BJ (cell line): ENCODE measurements at regions of chr5 and their contacts with region 1.

Region 1: DNA sequence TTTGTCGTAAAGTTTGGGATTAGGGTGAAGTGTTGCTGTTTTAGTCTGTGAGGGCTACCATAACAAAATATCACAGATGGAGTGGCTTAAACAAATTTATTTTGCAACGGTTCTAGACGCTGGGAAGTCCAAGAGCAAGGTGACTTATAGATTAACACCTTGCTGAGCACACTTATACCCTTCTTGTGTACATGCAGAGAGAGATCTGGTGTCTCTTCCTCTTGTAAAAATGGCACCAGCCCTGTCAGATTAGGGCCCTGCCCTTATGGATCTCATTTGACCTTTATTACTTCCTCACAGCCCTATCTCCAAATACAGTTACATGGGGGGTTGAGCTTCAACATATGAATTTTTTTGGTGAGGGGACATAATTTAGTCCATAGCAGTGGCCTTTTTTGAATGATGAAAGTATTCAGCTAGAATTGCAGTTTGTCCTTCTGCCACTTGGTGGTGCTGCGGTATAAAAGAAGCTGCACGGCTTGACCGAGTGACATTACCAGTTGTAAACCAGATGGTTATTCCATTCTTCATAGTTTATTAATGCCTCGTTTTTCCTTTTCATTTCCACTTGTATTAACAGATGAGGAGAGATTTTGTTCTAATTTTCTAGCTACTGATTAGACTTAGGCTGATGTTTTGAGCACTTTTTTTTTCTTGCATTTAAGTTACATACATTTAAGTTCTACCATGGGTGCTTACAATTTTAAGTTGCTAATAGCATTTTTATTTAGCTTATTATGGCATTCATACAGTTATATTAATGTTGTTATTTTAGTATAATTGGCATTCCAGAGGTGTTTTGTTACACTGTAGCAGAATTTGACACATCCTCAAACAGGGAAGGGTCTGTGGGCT is 19.4 kb downstream of the DCP2 start:
- DNase-seq: no peak
- H3K4me3 ChIP-seq: no peak overlapping the region
- H3K27me3 ChIP-seq: no peaks in the 10 kb centered on the region
- CTCF ChIP-seq: peak; percentile 82

Region 2: GRCh38 chr5:112479407-112479806 is 516.6 kb before region 1 on chr5:
- CTCF ChIA-PET with region 1: no interaction called
- POLR2A ChIA-PET with region 1: no interaction called
- DNase-seq: no peak
- H3K4me3 ChIP-seq: no peak overlapping the region
- H3K27me3 ChIP-seq: no peaks in the 10 kb centered on the region
- CTCF ChIP-seq: no peak

Region 3: DNA sequence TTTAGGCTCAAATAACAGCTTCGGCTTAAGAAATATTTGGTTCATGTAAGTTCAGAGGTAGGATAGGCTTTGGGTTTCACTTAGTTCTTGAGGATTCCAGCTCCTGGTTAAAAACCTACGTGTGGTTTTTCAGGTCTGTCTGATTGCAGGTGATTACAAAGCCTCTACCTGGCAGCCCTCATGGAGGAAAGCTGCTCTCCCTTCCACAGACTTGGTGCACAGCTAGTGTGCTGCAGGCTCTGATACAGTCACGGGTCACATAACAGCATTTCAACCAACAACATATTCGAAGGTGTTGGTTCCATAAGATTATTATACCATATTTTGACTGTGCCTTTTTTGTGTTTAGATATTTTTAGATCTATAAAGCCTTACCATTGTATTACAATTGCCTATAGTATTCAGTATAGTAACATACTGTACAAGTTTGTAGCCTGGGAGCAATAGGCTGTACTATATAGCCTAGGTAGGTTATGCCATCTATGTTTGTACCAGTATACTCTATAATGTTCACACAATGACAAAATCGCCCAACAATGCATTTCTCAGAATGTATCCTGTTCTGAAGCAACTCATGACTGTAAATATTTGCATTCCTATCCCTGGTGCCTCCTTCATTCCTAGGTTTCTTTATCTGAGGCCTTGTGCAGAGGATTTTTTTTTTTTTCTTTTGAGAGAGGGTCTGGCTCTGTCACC is 27.4 kb before region 1 on chr5:
- CTCF ChIA-PET with region 1: no interaction called
- POLR2A ChIA-PET with region 1: no interaction called
- DNase-seq: no peak
- H3K4me3 ChIP-seq: no peak overlapping the region
- H3K27me3 ChIP-seq: no peaks in the 10 kb centered on the region; the same call in 1 of the 2 replicates
- CTCF ChIP-seq: no peak

Region 4: GRCh38 chr5:113330533-113331208 is 334.7 kb after region 1 on chr5:
- CTCF ChIA-PET with region 1: interaction called, 34 read pairs
- POLR2A ChIA-PET with region 1: no interaction called
- DNase-seq: no peak
- H3K4me3 ChIP-seq: no peak overlapping the region
- H3K27me3 ChIP-seq: no peaks in the 10 kb centered on the region
- CTCF ChIP-seq: peak; percentile 31; the same call in 1 of the 2 replicates

Region 5: DNA sequence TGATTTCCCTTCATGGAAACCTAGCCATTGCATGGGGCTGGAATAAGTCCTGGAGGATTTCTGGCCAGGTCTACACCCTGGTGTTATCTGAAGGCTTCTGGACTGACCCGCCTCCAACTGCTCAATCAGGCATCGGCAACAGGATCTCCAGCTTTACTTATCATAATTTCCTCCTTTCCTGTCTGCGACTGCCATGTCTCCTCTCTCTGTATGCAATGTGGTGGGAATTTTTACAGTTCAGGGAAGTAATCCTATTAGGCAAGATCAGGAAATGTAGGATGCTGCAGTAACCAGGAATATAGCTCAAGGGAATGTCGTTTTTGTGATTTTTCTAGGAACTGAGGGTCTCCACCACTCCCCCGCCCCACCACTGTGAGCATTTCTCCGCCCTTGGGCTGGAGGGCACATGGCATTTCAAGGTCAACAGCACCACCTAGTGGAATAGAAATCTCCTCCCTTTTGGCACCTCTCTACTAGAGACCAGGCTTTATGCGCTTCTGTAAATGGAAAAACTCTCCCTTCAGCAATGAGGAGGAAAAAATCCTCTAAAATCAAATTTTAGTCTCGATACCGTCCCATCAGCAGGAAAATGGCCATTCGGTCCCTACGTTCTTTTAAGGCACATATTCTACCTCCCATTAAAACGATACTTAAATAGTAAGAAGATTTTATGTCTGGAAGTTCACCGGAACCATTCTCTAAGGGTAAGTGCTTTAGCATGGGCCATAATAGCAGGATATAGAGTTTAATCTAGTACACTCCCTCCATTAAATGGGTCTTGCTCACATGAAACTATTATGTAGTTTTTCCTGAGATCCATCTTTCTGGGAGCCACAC is 610.5 kb after region 1 on chr5:
- CTCF ChIA-PET with region 1: interaction called, 11 read pairs
- POLR2A ChIA-PET with region 1: no interaction called
- DNase-seq: no peak
- H3K4me3 ChIP-seq: no peak overlapping the region
- H3K27me3 ChIP-seq: no peaks in the 10 kb centered on the region
- CTCF ChIP-seq: peak; percentile 72